ENCODE measurements at regions of chr5 and their contacts with region 1.

Region 1: GRCh38 chr5:131252824-131253171 is 11.1 kb upstream of the CDC42SE2 start:
- DNase-seq: peak; percentile 87
- ATAC-seq: peak; percentile 70
- H3K4me3 Mint-ChIP-seq: peak overlapping the region; percentile 84
- H3K27ac Mint-ChIP-seq: peak overlapping the region; percentile 98
- H3K4me1 Mint-ChIP-seq: peaks cover 69% of the 10 kb centered on the region
- H3K27me3 Mint-ChIP-seq: no peaks in the 10 kb centered on the region

Region 2: GRCh38 chr5:131165119-131165727 is 87.6 kb before region 1 on chr5 and contains the start of gene HINT1:
- CTCF ChIA-PET with region 1: interaction called, 3 read pairs
- POLR2A ChIA-PET with region 1: interaction called, 4 read pairs
- intact Hi-C with region 1: loop called (anchors 1 to 2 kb)
- DNase-seq: peak; percentile 96
- ATAC-seq: peak; percentile 89
- H3K4me3 Mint-ChIP-seq: peak within 1 kb of the TSS; percentile 83
- H3K27ac Mint-ChIP-seq: peak within 1 kb of the TSS; percentile 99
- H3K4me1 Mint-ChIP-seq: peaks cover 51% of the 10 kb centered on the region
- H3K27me3 Mint-ChIP-seq: no peaks in the 10 kb centered on the region
- total RNA-seq, gene HINT1: 298 to 312 TPM

Region 3: DNA sequence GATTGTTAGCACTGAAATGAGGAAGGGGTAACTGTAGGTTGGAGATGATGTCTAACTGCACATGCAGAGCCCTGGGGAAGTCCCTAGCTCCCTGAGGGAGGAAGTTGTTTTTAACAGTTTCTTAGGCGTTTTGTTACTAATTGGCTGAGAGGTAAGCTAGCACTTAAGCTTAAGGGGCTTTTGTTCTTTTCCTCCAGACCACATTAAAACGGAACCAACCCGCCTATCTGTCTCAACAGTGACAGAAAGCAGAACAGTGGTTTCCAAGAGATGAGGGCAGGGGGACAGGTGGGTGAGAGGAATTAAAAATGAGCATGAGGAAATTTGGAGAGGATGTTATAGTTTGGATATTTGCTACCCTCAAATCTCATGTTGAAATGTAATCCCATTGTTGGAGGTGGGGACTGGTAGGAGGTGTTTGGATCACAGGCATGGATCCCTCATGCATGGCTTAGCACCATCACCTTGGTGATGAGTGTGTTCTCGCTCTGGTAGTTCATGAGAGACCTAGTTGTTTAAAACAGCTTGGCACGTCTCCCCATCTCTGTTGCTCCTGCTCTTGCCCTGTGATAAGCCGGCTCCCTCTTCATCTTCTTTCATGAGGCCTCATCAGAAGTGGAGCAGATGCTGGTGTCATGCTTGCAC is 43.2 kb before region 1 on chr5:
- CTCF ChIA-PET with region 1: interaction called, 3 read pairs
- POLR2A ChIA-PET with region 1: no interaction called
- intact Hi-C with region 1: loop called (anchors 2 kb)
- DNase-seq: peak; percentile 66
- ATAC-seq: peak; percentile 95
- H3K4me3 Mint-ChIP-seq: peak overlapping the region; percentile 70
- H3K27ac Mint-ChIP-seq: peak overlapping the region; percentile 96
- H3K4me1 Mint-ChIP-seq: peaks cover 48% of the 10 kb centered on the region
- H3K27me3 Mint-ChIP-seq: no peaks in the 10 kb centered on the region

Region 4: GRCh38 chr5:131263648-131264450 is 11.1 kb after region 1 on chr5 and contains the start of gene CDC42SE2:
- CTCF ChIA-PET with region 1: interaction called, 25 read pairs
- POLR2A ChIA-PET with region 1: interaction called, 50 read pairs
- intact Hi-C with region 1: loop called (anchors 1 kb)
- DNase-seq: peak; percentile 91
- ATAC-seq: peak; percentile 86
- H3K4me3 Mint-ChIP-seq: peak within 1 kb of the TSS; percentile 81
- H3K27ac Mint-ChIP-seq: peak within 1 kb of the TSS; percentile 96
- H3K4me1 Mint-ChIP-seq: peaks cover 44% of the 10 kb centered on the region
- H3K27me3 Mint-ChIP-seq: no peaks in the 10 kb centered on the region
- total RNA-seq, gene CDC42SE2: 68.3 to 99.6 TPM

Region 5: DNA sequence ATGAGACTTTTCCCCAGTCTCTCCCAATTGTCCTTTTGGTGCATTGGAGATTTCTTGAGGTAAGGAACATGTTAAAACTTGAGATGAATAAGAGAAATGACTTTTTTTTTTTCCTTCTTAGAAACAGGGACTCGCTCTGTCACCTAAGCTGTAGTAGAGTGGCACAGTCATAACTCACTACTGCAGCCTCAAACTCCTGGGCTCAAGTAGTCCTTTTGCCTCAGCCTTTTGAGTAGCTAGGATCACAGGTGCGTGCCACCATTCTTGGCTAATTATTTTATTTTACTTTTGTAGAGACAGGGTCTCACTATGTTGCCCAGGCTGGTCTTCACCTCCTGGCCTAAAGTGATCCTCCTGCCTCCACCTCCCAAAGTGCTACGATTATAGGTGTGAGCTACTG is 36.9 kb after region 1 on chr5:
- CTCF ChIA-PET with region 1: interaction called, 5 read pairs
- POLR2A ChIA-PET with region 1: interaction called, 5 read pairs
- intact Hi-C with region 1: loop called in 1 of 2 experiments (anchors 2 kb)
- DNase-seq: peak; percentile 61
- ATAC-seq: peak; percentile 80
- H3K4me3 Mint-ChIP-seq: peak overlapping the region; percentile 64
- H3K27ac Mint-ChIP-seq: peak overlapping the region; percentile 98
- H3K4me1 Mint-ChIP-seq: peaks cover 72% of the 10 kb centered on the region
- H3K27me3 Mint-ChIP-seq: no peaks in the 10 kb centered on the region

Measured in activated CD4-positive, alpha-beta T cell treated with anti-CD3 and anti-CD28 coated beads for 36 hours (primary cell).